ENCODE measurements at regions of chr6 and their contacts with region 1.

Region 1: GRCh38 chr6:27743818-27744217 is 168.4 kb downstream of the OR2B2 start:
- DNase-seq: no peak
- H3K4me3 ChIP-seq: no peak overlapping the region
- H3K27ac ChIP-seq: no peak overlapping the region
- H3K4me1 ChIP-seq: no peaks in the 10 kb centered on the region
- H3K27me3 ChIP-seq: peaks cover 14 to 61% (median 43%) of the 10 kb centered on the region in 4 experiments
- CTCF ChIP-seq: no peak
- EP300 ChIP-seq: no peak
- POLR2A ChIP-seq: no peak
- RAD21 ChIP-seq: no peak

Region 2: GRCh38 chr6:27753668-27754407 is 10.0 kb after region 1 on chr6:
- CTCF ChIA-PET with region 1: interaction called, 19 read pairs
- POLR2A ChIA-PET with region 1: interaction called, 3 read pairs
- DNase-seq: peak; percentile 59 to 71
- H3K4me3 ChIP-seq: peak overlapping the region; percentile 84 to 100 (median 91); a peak in 7 of 8 replicates
- H3K27ac ChIP-seq: no peak overlapping the region
- H3K4me1 ChIP-seq: peaks cover 0 to 13% (median 1%) of the 10 kb centered on the region in 4 experiments; a peak in 4 of 7 replicates
- H3K27me3 ChIP-seq: peaks cover 0 to 29% (median 12%) of the 10 kb centered on the region in 4 experiments; a peak in 6 of 7 replicates
- CTCF ChIP-seq: peak in 2 of 3 experiments; percentile 26 to 31; a peak in 2 of 4 replicates
- EP300 ChIP-seq: no peak
- POLR2A ChIP-seq: no peak
- RAD21 ChIP-seq: no peak; a peak in 1 of 4 replicates